Activated CD4-positive, alpha-beta T cell treated with anti-CD3 and anti-CD28 coated beads for 36 hours (primary cell): ENCODE measurements at regions of chr7 and their contacts with region 1.

Region 1: GRCh38 chr7:92447345-92448204 is at the start of gene GATAD1:
- DNase-seq: peak; percentile 91
- ATAC-seq: peak; percentile 89
- H3K4me3 Mint-ChIP-seq: peak within 1 kb of the TSS; percentile 86
- H3K27ac Mint-ChIP-seq: peak within 1 kb of the TSS; percentile 84
- H3K4me1 Mint-ChIP-seq: peaks cover 15% of the 10 kb centered on the region
- H3K27me3 Mint-ChIP-seq: no peaks in the 10 kb centered on the region
- total RNA-seq, gene GATAD1: 18.4 to 19.0 TPM

Region 2: GRCh38 chr7:91826377-91826776 is 621.2 kb before region 1 on chr7:
- CTCF ChIA-PET with region 1: interaction called, 10 read pairs
- POLR2A ChIA-PET with region 1: no interaction called
- intact Hi-C with region 1: loop called in 1 of 2 experiments (anchors 1 kb)
- DNase-seq: no peak
- ATAC-seq: no peak
- H3K4me3 Mint-ChIP-seq: no peak overlapping the region
- H3K27ac Mint-ChIP-seq: no peak overlapping the region
- H3K4me1 Mint-ChIP-seq: no peaks in the 10 kb centered on the region
- H3K27me3 Mint-ChIP-seq: no peaks in the 10 kb centered on the region

Region 3: DNA sequence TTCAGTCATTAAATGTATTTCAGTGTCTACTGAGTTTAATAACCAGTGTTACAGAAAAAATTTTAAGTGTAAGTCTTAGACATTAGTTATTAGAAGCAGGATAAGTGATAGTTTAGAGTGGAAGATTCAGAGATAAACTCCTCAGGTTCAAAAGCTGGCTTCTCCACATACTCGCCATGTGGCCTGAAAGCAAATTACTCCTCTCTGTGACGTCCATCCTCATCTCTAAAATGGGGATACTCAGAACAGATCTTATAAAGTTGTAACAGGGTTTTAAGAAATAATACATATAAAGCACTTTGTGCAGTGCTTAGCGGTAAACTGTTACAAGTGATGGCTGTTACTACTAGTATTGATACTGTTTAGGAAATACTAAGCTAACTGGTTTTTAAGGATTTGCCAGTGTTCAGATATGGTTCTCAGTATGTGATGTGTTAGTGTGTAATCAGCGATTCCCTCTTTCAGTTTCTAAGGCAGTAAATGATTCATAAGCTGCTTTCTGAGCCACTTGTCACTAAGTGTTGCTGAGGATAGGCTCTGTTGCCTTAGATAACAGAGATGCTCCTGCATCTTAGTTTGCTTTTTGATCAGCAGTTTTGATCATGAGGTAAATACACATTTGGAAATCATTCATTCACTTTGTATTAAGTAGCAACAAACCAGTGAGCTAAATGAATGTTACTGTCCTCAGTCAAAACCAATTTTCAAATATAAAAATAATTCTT is 372.0 kb before region 1 on chr7:
- CTCF ChIA-PET with region 1: interaction called, 4 read pairs
- POLR2A ChIA-PET with region 1: no interaction called
- intact Hi-C with region 1: loop called in 1 of 2 experiments (anchors 5 kb)
- DNase-seq: no peak
- ATAC-seq: peak; percentile 98
- H3K4me3 Mint-ChIP-seq: no peak overlapping the region
- H3K27ac Mint-ChIP-seq: no peak overlapping the region
- H3K4me1 Mint-ChIP-seq: peaks cover 9% of the 10 kb centered on the region
- H3K27me3 Mint-ChIP-seq: no peaks in the 10 kb centered on the region

Region 4: DNA sequence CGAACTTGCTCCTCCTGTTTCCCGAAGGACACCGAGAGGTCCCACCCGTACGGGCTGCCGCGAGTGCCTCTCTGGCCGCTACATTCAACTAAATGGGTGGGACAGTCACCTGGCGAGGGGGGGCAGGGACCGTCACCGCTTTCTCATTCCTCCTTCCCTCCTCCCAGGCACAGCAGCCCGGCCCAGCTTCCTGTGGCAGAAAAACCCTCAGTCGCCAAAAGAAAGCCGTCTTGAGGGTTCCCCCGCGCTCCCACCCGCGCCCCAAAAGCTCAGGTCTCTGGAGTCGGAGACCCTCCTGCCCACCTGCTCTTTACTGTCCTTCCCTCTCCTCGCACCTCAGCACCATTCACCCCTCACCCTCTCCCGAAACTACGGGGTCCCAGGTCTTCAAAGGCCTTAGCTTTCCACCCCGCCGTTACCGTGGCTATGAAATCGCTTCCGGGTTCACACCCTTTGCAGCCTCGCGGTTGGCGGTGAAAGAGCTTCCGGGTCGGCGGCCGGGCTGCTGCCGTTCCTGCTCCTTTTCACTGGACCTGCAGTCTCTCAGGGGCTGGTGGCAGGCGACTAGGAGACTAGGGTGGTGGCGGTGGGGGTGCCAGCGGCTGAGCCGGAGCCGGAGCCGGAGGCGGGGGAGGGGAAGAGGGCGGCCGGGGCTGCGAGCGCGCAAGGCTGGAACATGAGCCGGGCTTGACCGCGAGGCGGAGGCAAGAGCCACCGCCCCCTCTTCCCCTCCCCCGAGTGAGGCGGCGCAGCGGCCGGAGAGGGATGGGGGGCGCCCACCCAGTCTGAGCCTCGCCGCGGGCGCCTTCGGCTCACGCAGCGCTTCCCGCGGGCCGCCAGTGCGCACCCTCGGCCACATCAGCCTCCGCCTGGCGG is 201.8 kb before region 1 on chr7 and contains the starts of genes ANKIB1 and KRIT1:
- CTCF ChIA-PET with region 1: interaction called, 15 read pairs
- POLR2A ChIA-PET with region 1: interaction called, 12 read pairs
- intact Hi-C with region 1: loop called (anchors 1 to 5 kb)
- DNase-seq: peak; percentile 93
- ATAC-seq: peak; percentile 81
- H3K4me3 Mint-ChIP-seq: peak within 1 kb of the TSS; percentile 97
- H3K27ac Mint-ChIP-seq: peak within 1 kb of the TSS; percentile 98
- H3K4me1 Mint-ChIP-seq: peaks cover 26% of the 10 kb centered on the region
- H3K27me3 Mint-ChIP-seq: no peaks in the 10 kb centered on the region
- total RNA-seq, gene ANKIB1: 37.0 to 55.1 TPM
- total RNA-seq, gene KRIT1: 37.7 to 45.5 TPM

Region 5: DNA sequence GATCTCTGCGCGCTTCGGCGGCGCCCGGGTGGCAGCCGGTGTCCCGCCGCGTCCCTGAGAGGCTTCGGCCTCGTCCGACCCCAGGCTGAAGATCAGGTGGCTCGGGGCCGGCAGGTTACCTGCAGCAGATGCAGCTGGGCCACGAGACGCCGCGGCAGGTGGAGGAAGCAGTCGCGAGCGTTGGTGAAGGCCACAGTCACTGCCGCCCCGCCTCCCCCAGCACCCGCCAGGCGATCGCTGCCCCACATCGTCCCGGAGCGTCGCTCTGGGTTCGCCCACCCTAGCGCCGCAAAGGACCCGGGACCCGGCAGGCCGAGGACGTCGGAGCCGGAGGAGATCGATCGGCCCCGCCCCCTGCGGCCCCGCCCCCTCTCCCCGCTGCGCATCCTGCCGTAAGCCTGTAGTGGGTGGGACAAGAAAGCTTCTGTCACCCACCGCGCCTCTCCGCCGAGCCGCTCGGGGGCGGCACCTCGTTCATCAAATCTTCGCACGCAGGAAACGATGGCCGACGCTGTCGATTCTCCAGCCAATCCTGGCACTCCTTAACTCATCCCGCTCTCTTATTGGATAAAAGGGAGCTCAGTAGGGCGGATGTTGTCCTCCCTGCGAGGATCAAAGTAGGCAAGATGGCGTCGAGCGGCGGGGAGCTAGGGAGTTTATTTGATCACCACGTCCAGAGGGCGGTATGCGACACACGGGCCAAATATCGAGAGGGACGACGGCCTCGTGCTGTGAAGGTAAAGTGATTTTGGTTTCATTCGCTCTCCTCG is 80.8 kb after region 1 on chr7 and contains the starts of genes PEX1 and RBM48:
- CTCF ChIA-PET with region 1: interaction called, 13 read pairs
- POLR2A ChIA-PET with region 1: interaction called, 11 read pairs
- intact Hi-C with region 1: loop called (anchors 1 kb)
- DNase-seq: peak; percentile 98
- ATAC-seq: peak; percentile 95
- H3K4me3 Mint-ChIP-seq: peak within 1 kb of the TSS; percentile 90
- H3K27ac Mint-ChIP-seq: peak within 1 kb of the TSS; percentile 93
- H3K4me1 Mint-ChIP-seq: peaks cover 29% of the 10 kb centered on the region
- H3K27me3 Mint-ChIP-seq: no peaks in the 10 kb centered on the region
- total RNA-seq, gene PEX1: 14.7 to 16.0 TPM
- total RNA-seq, gene RBM48: 12.8 to 13.1 TPM